SK-N-SH (cell line): ENCODE measurements at regions of chr12 and their contacts with region 1.

Region 1: DNA sequence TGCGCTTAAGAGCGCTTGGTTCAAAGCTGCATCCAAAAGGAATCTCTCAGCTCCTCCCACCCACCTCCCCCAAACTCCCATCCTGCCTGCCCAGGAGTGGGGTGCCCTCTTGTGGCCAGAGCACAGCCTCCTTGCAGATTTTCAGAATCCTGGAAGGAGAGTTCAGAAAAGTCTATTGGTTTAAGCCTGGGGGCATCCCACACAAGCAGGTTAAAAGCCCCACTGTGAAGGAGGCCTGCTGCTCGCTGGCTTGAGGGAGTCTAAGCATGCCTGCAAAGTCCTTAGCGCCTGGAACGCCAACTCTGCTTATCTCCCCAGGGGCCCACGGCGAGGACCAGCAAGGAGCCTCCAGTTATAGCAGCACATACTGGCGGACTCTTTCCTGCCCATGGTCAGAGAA is 297.1 kb downstream of the KSR2 start:
- DNase-seq: peak; percentile 55
- H3K4me3 ChIP-seq: no peak overlapping the region
- H3K27ac ChIP-seq: no peak overlapping the region
- H3K4me1 ChIP-seq: peaks cover 6 to 11% of the 10 kb centered on the region in 2 experiments; a peak in 1 of 4 replicates
- H3K27me3 ChIP-seq: no peaks in the 10 kb centered on the region
- CTCF ChIP-seq: peak; percentile 64
- EP300 ChIP-seq: no peak
- RAD21 ChIP-seq: peak; percentile 70

Region 2: DNA sequence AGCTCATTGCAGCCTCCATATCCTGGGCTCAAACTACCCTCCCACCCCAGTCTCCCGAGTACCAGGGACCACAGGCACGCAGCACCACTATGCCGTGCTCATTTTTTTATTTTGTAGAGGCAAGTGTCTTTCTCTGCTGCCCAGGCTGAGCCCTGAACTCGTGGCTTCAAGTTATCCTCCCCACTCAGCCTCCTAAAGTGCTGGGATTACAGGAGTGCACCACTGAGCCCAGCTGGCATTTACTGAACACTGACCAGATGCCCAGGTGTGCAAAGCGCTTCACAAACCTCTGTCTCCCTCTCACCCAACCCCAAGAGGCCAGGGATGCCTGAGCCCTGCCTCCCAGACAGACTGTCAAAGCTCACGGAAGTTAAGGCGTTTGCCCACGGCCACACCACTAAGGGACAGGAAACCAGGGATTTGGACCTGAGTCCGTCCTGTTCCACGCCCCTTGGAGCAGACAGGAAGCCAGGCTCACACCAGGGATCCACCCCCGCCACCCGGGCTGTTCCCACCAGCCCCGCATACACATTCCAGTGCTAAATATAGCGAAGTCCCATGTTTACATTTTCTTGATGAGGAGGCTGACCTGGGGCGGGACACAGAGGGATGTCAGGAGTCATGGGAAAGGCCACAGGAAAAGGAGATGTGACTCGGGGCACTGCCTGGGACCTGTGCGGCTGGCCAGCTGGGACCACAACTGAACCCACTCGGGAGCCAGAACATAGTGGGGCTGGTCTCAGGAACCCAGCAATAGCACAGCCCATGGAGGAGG is 623.7 kb before region 1 on chr12:
- CTCF ChIA-PET with region 1: no interaction called
- POLR2A ChIA-PET with region 1: no interaction called
- DNase-seq: no peak
- H3K4me3 ChIP-seq: no peak overlapping the region
- H3K27ac ChIP-seq: no peak overlapping the region
- H3K4me1 ChIP-seq: peaks cover 0 to 13% of the 10 kb centered on the region in 2 experiments; a peak in 1 of 4 replicates
- H3K27me3 ChIP-seq: no peaks in the 10 kb centered on the region
- CTCF ChIP-seq: no peak
- EP300 ChIP-seq: no peak
- RAD21 ChIP-seq: no peak

Region 3: GRCh38 chr12:117685110-117685926 is 13.6 kb after region 1 on chr12:
- CTCF ChIA-PET with region 1: interaction called, 12 read pairs
- POLR2A ChIA-PET with region 1: no interaction called
- DNase-seq: peak; percentile 84
- H3K4me3 ChIP-seq: peak overlapping the region; percentile 6 to 54; a peak in 2 of 4 replicates
- H3K27ac ChIP-seq: peak overlapping the region; percentile 94 to 97
- H3K4me1 ChIP-seq: peaks cover 32 to 44% of the 10 kb centered on the region in 2 experiments
- H3K27me3 ChIP-seq: no peaks in the 10 kb centered on the region
- CTCF ChIP-seq: no peak
- EP300 ChIP-seq: peak; percentile 86 to 96
- RAD21 ChIP-seq: peak; percentile 40